ENCODE measurements at regions of chr13 and their contacts with region 1.

Region 1: GRCh38 chr13:46126552-46127357 is 21.9 kb upstream of the CPB2 start:
- DNase-seq: peak; percentile 45 to 58
- ATAC-seq: peak; percentile 75 to 88 (median 80)
- H3K4me3 ChIP-seq: no peak overlapping the region
- H3K27ac ChIP-seq: no peak overlapping the region
- H3K4me1 ChIP-seq: peaks cover 0 to 18% (median 0%) of the 10 kb centered on the region in 9 donors
- H3K27me3 ChIP-seq: peaks cover 0 to 29% (median 11%) of the 10 kb centered on the region in 7 donors
- CTCF ChIP-seq: peak; percentile 41 to 88 (median 67)

Region 2: GRCh38 chr13:45623515-45624090 is 503.2 kb before region 1 on chr13:
- intact Hi-C with region 1: loop called in 6 of 10 experiments (anchors 5 to 10 kb)
- DNase-seq: no peak
- ATAC-seq: no peak
- H3K4me3 ChIP-seq: no peak overlapping the region
- H3K27ac ChIP-seq: no peak overlapping the region
- H3K4me1 ChIP-seq: no peaks in the 10 kb centered on the region
- H3K27me3 ChIP-seq: peaks cover 0 to 52% (median 23%) of the 10 kb centered on the region in 7 donors
- CTCF ChIP-seq: peak in 7 of 9 donors; percentile 21 to 59 (median 51)

Region 3: DNA sequence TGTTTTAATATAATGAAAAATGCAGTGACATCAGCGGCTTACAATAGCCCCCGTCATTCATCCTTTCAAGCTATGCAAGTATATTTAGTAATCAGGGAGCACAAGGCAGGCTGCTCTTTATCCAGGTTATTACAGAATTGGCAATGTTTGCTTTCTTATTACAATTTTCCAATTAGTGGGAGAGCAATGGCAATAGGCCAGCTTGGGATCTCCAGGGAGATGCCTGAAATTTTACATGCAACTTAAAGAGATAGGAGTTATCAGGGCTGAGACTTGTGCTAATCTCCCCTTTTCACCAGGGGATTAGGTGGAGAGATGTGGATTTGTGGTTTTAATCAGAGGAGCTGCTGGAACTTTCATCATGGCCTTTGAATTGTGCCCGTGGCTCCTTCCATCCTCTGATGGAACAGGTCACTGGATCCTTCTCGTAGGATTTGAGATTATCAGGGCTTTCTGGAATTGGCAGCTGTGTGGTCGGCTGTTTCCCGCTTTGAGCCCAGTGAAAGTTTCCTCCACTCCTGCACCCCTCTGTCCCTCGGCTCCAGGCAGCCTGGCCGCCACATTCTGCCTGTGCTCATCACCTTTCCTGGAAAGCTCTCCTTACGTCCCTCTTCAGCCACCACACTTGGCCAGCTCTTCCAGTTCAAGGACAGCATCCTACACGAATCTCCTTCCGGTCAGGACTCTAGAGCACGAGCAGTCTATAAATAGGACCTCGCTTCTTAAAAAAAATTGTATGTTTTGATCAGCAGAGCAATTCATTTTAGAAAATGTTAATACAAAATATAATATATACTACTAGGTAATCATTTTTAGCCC is 377.6 kb before region 1 on chr13:
- intact Hi-C with region 1: no loop called
- DNase-seq: no peak
- ATAC-seq: peak in 1 of 8 donors; percentile 63
- H3K4me3 ChIP-seq: no peak overlapping the region
- H3K27ac ChIP-seq: no peak overlapping the region
- H3K4me1 ChIP-seq: peaks cover 0 to 8% (median 0%) of the 10 kb centered on the region in 9 donors
- H3K27me3 ChIP-seq: peaks cover 0 to 4% (median 0%) of the 10 kb centered on the region in 7 donors
- CTCF ChIP-seq: no peak

Region 4: DNA sequence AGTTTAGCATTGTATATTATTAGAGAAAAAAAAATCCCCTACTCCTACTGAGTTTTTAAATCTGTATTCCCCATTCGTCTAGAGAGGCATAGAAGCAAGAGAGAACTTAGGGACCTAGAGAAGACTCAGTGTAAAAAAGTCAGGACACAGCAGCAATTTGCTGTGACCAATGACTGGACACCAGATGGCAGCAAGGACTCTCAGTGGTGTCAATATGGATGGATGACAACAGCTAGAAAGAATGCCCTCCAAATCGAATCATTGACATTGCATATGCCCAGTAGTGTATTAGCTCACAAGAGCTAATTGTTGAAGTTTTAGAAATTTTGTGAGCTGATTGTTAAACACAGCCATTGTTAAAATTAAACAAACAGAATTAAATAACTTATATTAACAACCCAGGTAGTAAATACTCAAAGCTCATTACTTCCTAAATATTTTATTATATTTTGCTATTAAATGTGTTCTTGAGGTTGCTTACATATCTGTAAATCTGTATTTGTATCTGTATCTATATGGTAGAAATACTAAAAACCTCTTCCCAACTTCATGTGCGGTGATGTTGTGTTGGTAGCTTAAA is 319.1 kb before region 1 on chr13:
- intact Hi-C with region 1: loop called in 5 of 10 experiments (anchors 10 kb)
- DNase-seq: peak in 1 of 2 donors; percentile 29
- ATAC-seq: peak in 4 of 8 donors; percentile 54 to 84 (median 74)
- H3K4me3 ChIP-seq: no peak overlapping the region
- H3K27ac ChIP-seq: no peak overlapping the region
- H3K4me1 ChIP-seq: no peaks in the 10 kb centered on the region
- H3K27me3 ChIP-seq: no peaks in the 10 kb centered on the region
- CTCF ChIP-seq: peak; percentile 11 to 72 (median 60)

Region 5: DNA sequence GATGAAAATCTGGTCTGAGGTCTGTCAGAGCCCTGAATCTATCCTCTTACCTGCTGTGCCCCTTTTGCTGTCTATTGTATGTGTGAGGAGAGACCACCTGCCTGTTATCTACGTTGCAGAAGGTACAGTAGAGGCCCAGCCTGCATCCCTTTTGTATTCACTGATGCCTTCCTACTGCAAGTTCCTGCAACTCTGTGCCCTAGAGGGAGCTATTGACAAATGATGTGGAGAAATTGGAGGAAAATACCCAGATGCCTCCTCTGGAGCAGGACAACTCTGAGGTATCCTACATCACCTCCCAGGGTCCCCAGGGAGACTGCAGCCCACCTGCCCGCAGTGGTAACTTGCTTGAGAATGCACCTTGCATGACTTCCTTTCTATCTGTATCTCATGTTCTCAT is 308.9 kb before region 1 on chr13:
- intact Hi-C with region 1: loop called in 1 of 10 experiments (anchors 10 kb)
- DNase-seq: no peak
- ATAC-seq: no peak
- H3K4me3 ChIP-seq: no peak overlapping the region
- H3K27ac ChIP-seq: no peak overlapping the region
- H3K4me1 ChIP-seq: no peaks in the 10 kb centered on the region
- H3K27me3 ChIP-seq: no peaks in the 10 kb centered on the region
- CTCF ChIP-seq: no peak

Region 6: DNA sequence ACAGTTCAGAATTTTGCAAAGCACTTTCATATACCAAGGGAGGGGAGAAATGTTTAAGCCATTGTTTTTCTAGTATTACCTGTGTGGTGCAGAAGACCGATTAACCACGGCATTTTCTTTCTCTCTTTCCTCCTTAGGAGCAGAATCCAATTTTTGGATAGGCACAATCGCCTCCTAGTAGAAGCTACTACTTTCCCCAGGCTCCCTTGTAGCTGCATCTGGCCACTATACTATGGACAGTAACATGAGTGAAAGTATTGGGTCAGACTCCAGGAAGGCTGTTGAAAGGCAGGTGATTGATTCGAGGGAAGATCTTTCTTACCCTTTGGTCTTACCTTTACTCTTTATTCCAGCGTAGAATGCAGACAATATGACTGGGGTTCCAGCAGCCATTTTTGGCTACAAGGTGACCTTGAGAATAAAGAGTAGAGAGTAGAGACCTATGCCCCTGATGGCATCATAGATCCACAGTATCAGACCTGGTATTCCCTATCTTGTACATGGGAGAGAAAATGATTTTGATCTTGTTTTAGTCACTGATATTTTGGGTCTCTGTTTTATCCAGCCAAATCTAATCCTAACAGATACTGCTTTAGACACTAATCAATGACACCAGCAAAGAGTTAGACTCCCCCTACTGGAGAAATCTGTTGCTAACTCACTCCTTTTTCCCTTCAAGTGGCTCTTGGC is 162.0 kb after region 1 on chr13:
- intact Hi-C with region 1: no loop called
- DNase-seq: no peak
- ATAC-seq: peak in 1 of 8 donors; percentile 25
- H3K4me3 ChIP-seq: no peak overlapping the region
- H3K27ac ChIP-seq: no peak overlapping the region
- H3K4me1 ChIP-seq: no peaks in the 10 kb centered on the region
- H3K27me3 ChIP-seq: peaks cover 0 to 5% (median 0%) of the 10 kb centered on the region in 7 donors
- CTCF ChIP-seq: peak in 7 of 9 donors; percentile 33 to 72 (median 42)

Region 7: DNA sequence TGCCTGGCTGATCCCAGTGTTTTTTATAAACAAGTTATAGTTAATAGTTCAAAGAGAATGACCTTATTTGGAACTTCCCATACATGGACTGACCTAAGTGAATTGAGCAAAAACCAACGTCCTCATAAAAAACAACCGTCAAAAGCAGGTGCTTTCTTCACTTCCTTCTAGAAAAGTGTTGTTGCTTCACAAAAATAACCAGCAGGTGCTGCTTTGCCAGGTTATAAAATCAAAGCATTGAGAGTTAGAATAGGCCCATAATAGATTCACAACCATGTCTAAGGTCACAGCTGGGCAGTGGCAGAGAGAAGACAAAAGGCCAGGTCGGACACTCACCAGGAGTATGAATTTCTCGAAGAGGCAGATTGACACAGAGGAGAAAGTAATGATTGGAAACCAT is 250.8 kb after region 1 on chr13:
- intact Hi-C with region 1: no loop called
- DNase-seq: no peak
- ATAC-seq: no peak
- H3K4me3 ChIP-seq: no peak overlapping the region
- H3K27ac ChIP-seq: peak overlapping the region in 2 of 10 donors; percentile 40 to 80
- H3K4me1 ChIP-seq: peaks cover 0 to 44% (median 0%) of the 10 kb centered on the region in 9 donors
- H3K27me3 ChIP-seq: peaks cover 0 to 20% (median 0%) of the 10 kb centered on the region in 7 donors
- CTCF ChIP-seq: no peak

Measured in heart right ventricle (tissue), 16 donors.